HCT116 (cell line): ENCODE measurements at regions of chr4 and their contacts with region 1.

Region 1: GRCh38 chr4:77618383-77619122 is 12.9 kb downstream of the CXCL13 start:
- DNase-seq: peak; percentile 67
- ATAC-seq: peak; percentile 99
- H3K4me3 ChIP-seq: no peak overlapping the region
- H3K27ac ChIP-seq: no peak overlapping the region
- H3K4me1 ChIP-seq: peaks cover 2 to 7% of the 10 kb centered on the region in 2 experiments; a peak in 2 of 4 replicates
- H3K27me3 ChIP-seq: no peaks in the 10 kb centered on the region
- CTCF ChIP-seq: peak; percentile 79 to 83 (median 80)
- POLR2A ChIP-seq: no peak
- RAD21 ChIP-seq: peak; percentile 85

Region 2: DNA sequence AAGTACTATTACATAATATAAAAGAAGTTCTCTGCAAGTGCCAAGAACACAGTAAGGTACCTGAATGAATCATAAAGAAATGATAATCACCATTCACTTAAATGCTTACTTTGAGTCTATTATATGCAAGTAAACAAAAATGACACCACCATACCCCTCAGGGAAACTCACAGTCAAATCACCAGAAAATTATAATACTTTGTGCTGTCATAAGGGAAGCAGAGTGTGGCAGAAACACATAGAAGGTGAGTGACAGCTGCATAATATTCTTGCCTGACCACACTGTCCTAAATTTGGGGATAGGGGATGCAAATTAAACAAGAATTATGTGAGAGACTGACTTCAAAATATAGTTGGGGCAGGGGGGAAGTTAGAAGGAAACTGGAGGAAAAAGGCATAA is 555.7 kb before region 1 on chr4:
- CTCF ChIA-PET with region 1: no interaction called
- POLR2A ChIA-PET with region 1: no interaction called
- RAD21 ChIA-PET with region 1: no interaction called
- intact Hi-C with region 1: no loop called
- DNase-seq: no peak
- ATAC-seq: no peak
- H3K4me3 ChIP-seq: no peak overlapping the region
- H3K27ac ChIP-seq: no peak overlapping the region
- H3K4me1 ChIP-seq: no peaks in the 10 kb centered on the region; a peak in 1 of 4 replicates
- H3K27me3 ChIP-seq: no peaks in the 10 kb centered on the region
- CTCF ChIP-seq: no peak
- POLR2A ChIP-seq: no peak
- RAD21 ChIP-seq: no peak

Region 3: DNA sequence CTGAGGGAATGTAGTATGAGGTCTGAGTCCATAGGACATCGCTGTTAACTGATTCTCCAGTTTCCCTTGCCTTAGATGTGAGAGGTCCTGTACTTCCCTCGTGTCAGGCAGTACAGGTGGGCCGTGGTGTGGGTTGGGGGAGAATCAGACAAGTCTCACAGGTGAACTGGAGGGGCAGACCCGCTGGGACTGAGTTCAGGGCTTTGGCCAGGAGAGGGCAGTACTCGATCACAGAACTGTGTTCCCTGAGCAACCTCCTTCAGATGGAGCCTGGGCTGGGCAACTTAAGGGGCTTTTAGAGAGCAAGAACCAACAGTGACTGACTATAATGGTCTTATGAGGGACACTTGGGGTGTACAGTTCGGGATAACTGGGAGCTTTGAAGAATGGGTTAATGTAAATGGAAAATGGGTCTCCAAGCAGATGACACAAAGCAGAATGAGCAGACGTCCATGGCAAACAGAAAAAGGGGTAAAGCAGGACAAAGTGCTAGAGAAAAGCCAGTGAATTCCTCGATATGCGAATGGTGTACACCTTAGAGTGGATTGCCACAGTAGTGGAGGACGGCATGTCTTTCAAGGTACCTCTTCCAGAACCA is 378.0 kb before region 1 on chr4:
- CTCF ChIA-PET with region 1: no interaction called
- POLR2A ChIA-PET with region 1: no interaction called
- RAD21 ChIA-PET with region 1: no interaction called
- intact Hi-C with region 1: loop called (anchors 10 kb)
- DNase-seq: peak; percentile 51
- ATAC-seq: peak; percentile 98
- H3K4me3 ChIP-seq: no peak overlapping the region
- H3K27ac ChIP-seq: no peak overlapping the region
- H3K4me1 ChIP-seq: no peaks in the 10 kb centered on the region
- H3K27me3 ChIP-seq: peaks cover 51% of the 10 kb centered on the region
- CTCF ChIP-seq: peak; percentile 81 to 95 (median 85)
- POLR2A ChIP-seq: no peak
- RAD21 ChIP-seq: peak; percentile 88

Region 4: DNA sequence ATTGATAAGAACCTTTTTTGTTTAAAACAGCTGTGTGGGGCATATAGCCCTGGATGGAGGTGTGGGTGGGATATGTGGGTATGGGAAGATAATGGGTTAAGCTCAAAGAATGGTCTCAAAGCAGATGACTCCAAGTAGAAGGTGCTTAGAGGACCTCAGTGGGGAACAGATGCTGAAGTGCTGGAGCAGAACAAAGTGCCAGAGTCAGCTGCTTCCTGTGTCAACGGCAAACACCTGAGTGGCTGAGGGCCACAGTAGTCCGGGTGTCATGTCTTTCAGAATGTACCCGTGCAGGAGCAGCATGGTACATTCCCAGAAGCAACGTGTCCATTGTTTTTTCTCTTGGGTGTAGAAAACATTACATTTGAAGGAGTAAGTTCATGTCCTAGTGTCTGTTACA is 250.9 kb before region 1 on chr4:
- CTCF ChIA-PET with region 1: no interaction called
- POLR2A ChIA-PET with region 1: no interaction called
- RAD21 ChIA-PET with region 1: no interaction called
- intact Hi-C with region 1: loop called (anchors 5 kb)
- DNase-seq: no peak
- ATAC-seq: no peak
- H3K4me3 ChIP-seq: no peak overlapping the region
- H3K27ac ChIP-seq: no peak overlapping the region
- H3K4me1 ChIP-seq: no peaks in the 10 kb centered on the region
- H3K27me3 ChIP-seq: no peaks in the 10 kb centered on the region; the same call in 1 of the 2 replicates
- CTCF ChIP-seq: no peak
- POLR2A ChIP-seq: no peak
- RAD21 ChIP-seq: no peak

Region 5: GRCh38 chr4:77385124-77385969 is 233.2 kb before region 1 on chr4:
- CTCF ChIA-PET with region 1: no interaction called
- POLR2A ChIA-PET with region 1: no interaction called
- RAD21 ChIA-PET with region 1: no interaction called
- intact Hi-C with region 1: loop called (anchors 1 kb)
- DNase-seq: peak; percentile 54
- ATAC-seq: peak; percentile 97
- H3K4me3 ChIP-seq: no peak overlapping the region
- H3K27ac ChIP-seq: no peak overlapping the region
- H3K4me1 ChIP-seq: no peaks in the 10 kb centered on the region
- H3K27me3 ChIP-seq: peaks cover 15% of the 10 kb centered on the region
- CTCF ChIP-seq: peak; percentile 79 to 86 (median 82)
- POLR2A ChIP-seq: no peak
- RAD21 ChIP-seq: peak; percentile 84

Region 6: DNA sequence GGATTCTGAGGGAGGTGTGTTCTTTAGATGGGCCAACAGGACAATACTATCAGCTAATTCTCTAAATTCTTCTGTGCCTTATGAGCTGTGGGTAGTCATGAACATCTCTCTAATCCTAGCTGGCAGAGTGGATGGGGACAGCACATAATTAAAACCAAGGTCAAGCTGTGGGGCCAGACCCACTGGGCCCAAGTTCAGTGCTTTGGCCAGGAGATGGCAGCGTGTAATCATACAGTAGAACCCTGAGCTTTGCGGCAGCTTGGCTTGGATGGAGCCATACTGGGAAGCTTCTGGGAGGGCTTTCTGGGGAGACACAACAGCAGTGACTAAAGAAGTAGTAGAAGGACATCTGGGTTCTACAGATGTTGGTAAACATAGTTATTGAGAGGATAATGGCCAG is 153.3 kb before region 1 on chr4:
- CTCF ChIA-PET with region 1: interaction called, 11 read pairs
- POLR2A ChIA-PET with region 1: interaction called, 3 read pairs
- RAD21 ChIA-PET with region 1: interaction called in 1 of 2 experiments, 6 read pairs
- intact Hi-C with region 1: loop called (anchors 2 kb)
- DNase-seq: no peak
- ATAC-seq: peak; percentile 90
- H3K4me3 ChIP-seq: no peak overlapping the region
- H3K27ac ChIP-seq: no peak overlapping the region
- H3K4me1 ChIP-seq: no peaks in the 10 kb centered on the region
- H3K27me3 ChIP-seq: no peaks in the 10 kb centered on the region
- CTCF ChIP-seq: peak; percentile 57 to 62 (median 58); a peak in 5 of 6 replicates
- POLR2A ChIP-seq: no peak
- RAD21 ChIP-seq: peak; percentile 73

Region 7: GRCh38 chr4:77600521-77601451 is 17.8 kb before region 1 on chr4:
- CTCF ChIA-PET with region 1: interaction called, 14 read pairs
- POLR2A ChIA-PET with region 1: no interaction called
- RAD21 ChIA-PET with region 1: no interaction called
- intact Hi-C with region 1: no loop called
- DNase-seq: peak; percentile 37
- ATAC-seq: peak; percentile 76
- H3K4me3 ChIP-seq: no peak overlapping the region
- H3K27ac ChIP-seq: no peak overlapping the region
- H3K4me1 ChIP-seq: no peaks in the 10 kb centered on the region
- H3K27me3 ChIP-seq: peaks cover 26% of the 10 kb centered on the region
- CTCF ChIP-seq: peak; percentile 68 to 88 (median 87)
- POLR2A ChIP-seq: no peak
- RAD21 ChIP-seq: peak; percentile 71

Region 8: DNA sequence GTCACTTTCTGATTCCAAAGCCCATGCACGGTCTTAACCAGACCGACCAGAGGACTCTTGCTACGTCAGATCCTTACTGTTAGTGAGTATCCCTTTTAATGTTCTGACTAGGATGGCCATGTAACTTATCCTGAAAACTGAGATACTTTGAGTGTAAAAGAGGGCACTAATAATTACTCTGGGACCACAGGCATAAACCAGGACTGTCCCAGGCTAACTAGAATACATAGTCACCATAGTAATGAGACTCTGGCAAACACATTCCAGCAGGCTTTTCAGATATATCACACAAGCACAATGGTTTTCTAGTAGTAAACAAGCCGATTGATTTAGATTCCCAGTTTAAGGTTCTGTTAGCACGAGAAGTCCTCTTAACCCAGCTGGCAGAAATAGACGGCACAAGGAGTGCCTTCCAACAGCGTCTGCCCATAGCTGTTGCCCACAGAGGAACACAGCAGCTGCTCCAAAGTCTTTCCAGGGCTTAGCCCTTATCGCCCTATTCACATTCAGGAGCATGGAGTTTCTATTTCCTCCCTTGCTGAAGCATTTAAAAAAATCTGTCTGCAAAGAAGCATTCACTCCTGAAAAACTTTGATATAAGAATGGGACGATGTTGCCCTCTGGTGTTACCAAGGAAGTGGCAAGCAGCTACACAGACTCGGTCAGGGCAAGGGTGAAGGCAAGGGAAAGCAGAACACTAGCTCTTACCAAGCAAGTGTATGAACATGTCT is 79.5 kb after region 1 on chr4:
- CTCF ChIA-PET with region 1: interaction called, 3 read pairs
- POLR2A ChIA-PET with region 1: no interaction called
- RAD21 ChIA-PET with region 1: no interaction called
- intact Hi-C with region 1: loop called (anchors 5 kb)
- DNase-seq: peak; percentile 29
- ATAC-seq: peak; percentile 71
- H3K4me3 ChIP-seq: no peak overlapping the region
- H3K27ac ChIP-seq: no peak overlapping the region
- H3K4me1 ChIP-seq: peaks cover 11 to 24% of the 10 kb centered on the region in 2 experiments; a peak in 3 of 4 replicates
- H3K27me3 ChIP-seq: peaks cover 5% of the 10 kb centered on the region; the same call in 1 of the 2 replicates
- CTCF ChIP-seq: peak; percentile 59 to 70 (median 65); a peak in 5 of 6 replicates
- POLR2A ChIP-seq: no peak
- RAD21 ChIP-seq: peak; percentile 78

Region 9: GRCh38 chr4:77711469-77711868 is 92.9 kb after region 1 on chr4:
- CTCF ChIA-PET with region 1: no interaction called
- POLR2A ChIA-PET with region 1: no interaction called
- RAD21 ChIA-PET with region 1: no interaction called
- intact Hi-C with region 1: no loop called
- DNase-seq: no peak
- ATAC-seq: no peak
- H3K4me3 ChIP-seq: no peak overlapping the region
- H3K27ac ChIP-seq: no peak overlapping the region
- H3K4me1 ChIP-seq: no peaks in the 10 kb centered on the region
- H3K27me3 ChIP-seq: no peaks in the 10 kb centered on the region
- CTCF ChIP-seq: no peak
- POLR2A ChIP-seq: no peak
- RAD21 ChIP-seq: no peak